ENCODE measurements at regions of chr14 and their contacts with region 1.

Region 1: GRCh38 chr14:71166180-71166790 is 259.0 kb downstream of the PCNX1 start:
- DNase-seq: no peak
- H3K4me3 Mint-ChIP-seq: no peak overlapping the region
- H3K27ac Mint-ChIP-seq: no peak overlapping the region
- H3K4me1 Mint-ChIP-seq: peaks cover 16% of the 10 kb centered on the region
- H3K27me3 Mint-ChIP-seq: peaks cover 9% of the 10 kb centered on the region

Region 2: DNA sequence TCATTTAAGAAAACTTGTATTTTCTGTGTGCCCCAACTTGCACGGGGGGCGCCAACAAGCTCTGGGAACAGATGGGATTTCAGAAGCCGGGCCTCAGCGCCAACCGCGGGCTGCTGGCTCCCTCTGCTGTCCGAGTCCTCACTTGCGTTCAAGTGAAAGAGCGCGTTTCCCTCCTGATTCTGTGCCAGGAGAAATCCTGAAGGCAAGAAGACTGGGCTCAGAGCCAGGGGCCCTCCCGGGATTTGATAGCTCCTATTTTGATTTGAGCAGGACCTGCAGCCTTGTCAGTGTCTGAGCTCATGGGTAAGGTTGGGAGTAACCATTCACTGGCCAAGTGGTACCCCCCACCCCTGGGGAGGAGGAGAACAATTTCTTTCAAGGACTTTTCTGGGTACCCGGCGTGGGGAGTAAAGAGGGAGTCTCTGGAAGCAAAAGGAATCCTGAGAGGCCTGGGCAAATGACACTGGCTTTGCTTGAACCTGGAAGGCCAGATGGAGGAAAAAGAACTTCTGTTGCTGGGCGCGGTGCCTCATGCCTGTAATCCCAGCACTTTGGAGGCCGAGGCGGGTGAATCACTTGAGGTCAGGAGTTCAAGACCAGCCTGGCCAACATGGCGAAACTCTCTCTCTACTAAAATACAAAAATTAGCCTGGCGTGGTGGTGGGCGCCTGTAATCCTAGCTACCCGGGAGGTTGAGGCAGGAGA is 587.0 kb after region 1 on chr14:
- CTCF ChIA-PET with region 1: interaction called, 12 read pairs
- POLR2A ChIA-PET with region 1: no interaction called
- intact Hi-C with region 1: no loop called
- DNase-seq: peak; percentile 79
- H3K4me3 Mint-ChIP-seq: no peak overlapping the region
- H3K27ac Mint-ChIP-seq: no peak overlapping the region
- H3K4me1 Mint-ChIP-seq: no peaks in the 10 kb centered on the region
- H3K27me3 Mint-ChIP-seq: peaks cover 3% of the 10 kb centered on the region